ENCODE measurements at regions of chr12 and their contacts with region 1.

Region 1: DNA sequence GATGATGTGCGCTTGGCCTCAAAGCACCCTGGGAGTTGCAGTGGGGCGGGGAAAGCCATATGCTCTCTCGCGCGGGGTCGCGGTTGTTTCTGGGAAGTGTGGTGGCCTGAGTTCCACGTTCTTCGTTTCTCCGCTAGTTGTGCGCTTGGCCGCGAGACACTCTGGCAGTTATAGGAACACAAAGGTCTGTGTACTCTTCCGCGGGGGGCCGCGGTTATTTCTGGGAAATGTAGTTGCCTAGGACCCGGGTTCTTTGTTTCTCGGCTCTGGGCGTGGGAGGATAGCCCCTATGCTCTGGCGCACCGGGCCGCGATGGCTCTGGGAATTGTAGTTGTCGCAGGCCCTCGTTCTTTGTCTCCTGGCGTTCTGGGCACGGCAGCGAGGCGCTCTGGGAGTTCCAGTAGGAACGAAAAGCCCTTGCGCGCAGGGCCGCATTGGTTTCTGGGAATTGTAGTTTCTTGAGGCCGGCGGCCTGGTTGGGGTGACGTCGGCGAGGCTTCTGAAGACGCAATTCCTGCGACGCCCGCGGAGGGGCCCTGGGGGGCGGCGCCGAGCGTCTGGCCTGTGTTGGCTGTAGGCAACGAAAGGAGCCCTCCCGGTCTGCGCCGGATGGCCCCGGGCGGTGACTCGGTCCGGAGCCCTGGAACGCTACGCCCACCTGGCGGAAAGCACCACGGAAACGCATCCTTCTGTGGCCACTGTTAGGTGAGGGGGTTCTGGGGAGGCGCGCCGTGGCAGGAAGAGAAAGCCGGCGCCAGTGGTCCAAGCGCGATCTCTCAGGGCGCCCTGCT is at the start of gene ZNF140:
- DNase-seq: peak; percentile 92 to 94
- ATAC-seq: peak; percentile 82 to 84
- H3K4me3 ChIP-seq: peak within 1 kb of the TSS; percentile 88 to 94 (median 91)
- H3K27ac ChIP-seq: peak within 1 kb of the TSS; percentile 95 to 98 (median 96)
- H3K4me1 ChIP-seq: peaks cover 4 to 12% of the 10 kb centered on the region in 2 donors
- H3K27me3 ChIP-seq: no peaks in the 10 kb centered on the region
- CTCF ChIP-seq: peak; percentile 14 to 42 (median 36)
- POLR2A ChIP-seq: peak; percentile 53 to 61
- total RNA-seq, gene ZNF140: 5.4 to 14.5 (median 9.0) TPM

Region 2: GRCh38 chr12:132687208-132688164 is 393.1 kb before region 1 on chr12 and contains the starts of genes POLE and PXMP2:
- in situ Hi-C with region 1: no loop called
- intact Hi-C with region 1: loop called (anchors 2 kb)
- DNase-seq: peak; percentile 91 to 95
- ATAC-seq: peak; percentile 97 to 98
- H3K4me3 ChIP-seq: peak within 1 kb of the TSS; percentile 65 to 98 (median 80)
- H3K27ac ChIP-seq: peak within 1 kb of the TSS; percentile 62 to 77 (median 72)
- H3K4me1 ChIP-seq: peaks cover 6 to 10% of the 10 kb centered on the region in 2 donors
- H3K27me3 ChIP-seq: no peaks in the 10 kb centered on the region
- CTCF ChIP-seq: peak in 3 of 5 experiments; percentile 12 to 20 (median 18)
- POLR2A ChIP-seq: peak; percentile 74 to 76
- total RNA-seq, gene POLE: 7.1 to 18.7 (median 11.1) TPM
- total RNA-seq, gene PXMP2: 16.0 to 44.8 (median 38.6) TPM

Region 3: DNA sequence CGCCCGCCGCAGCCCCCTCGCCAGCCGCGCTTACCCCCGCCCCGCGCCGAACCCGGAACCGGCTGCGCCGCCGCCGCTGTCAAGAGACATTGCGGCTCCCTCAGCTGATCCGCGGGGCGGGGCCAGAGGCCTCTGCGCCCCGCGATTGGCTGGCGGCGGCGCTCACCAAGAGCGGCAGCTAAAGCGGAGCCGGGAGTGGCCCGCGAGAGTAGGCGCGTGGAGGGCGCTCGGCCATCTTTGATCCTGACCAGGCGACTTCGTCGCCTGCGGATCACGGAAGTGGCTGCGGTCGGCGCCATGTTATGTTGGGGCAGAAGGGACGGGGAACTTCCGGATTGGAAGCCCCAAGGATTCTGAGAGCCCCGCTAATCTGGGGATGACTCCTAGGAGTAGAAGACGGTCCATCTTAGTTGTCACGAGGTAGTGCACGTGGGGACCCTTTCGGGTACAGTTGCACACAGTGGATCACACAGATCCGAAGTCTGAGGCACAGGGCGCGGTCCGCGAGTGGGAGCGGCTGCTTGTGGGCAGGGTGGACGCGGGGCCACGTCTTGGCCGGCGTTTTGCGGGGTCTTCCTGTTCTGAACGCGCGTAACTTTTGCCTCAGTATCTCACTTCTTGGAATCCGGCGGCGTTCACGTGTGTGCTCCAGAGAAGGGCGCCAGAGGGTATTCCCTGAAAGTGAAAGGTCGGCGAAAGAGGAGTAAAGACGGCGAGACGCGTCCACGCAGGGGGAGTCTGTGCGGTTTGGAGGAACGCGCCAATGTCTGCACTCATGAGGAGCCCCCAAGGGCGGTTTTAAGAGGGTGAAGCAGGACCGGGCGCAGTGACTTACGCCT is 192.8 kb before region 1 on chr12 and contains the start of gene CHFR:
- in situ Hi-C with region 1: no loop called
- intact Hi-C with region 1: loop called (anchors 1 kb)
- DNase-seq: peak; percentile 84 to 91
- ATAC-seq: peak; percentile 97
- H3K4me3 ChIP-seq: peak within 1 kb of the TSS; percentile 73 to 91 (median 84)
- H3K27ac ChIP-seq: peak within 1 kb of the TSS; percentile 85 to 93 (median 91)
- H3K4me1 ChIP-seq: peaks cover 4 to 7% of the 10 kb centered on the region in 2 donors
- H3K27me3 ChIP-seq: no peaks in the 10 kb centered on the region
- CTCF ChIP-seq: no peak
- POLR2A ChIP-seq: peak; percentile 44 to 54
- total RNA-seq, gene CHFR: 10.8 to 19.6 (median 12.1) TPM

Region 4: DNA sequence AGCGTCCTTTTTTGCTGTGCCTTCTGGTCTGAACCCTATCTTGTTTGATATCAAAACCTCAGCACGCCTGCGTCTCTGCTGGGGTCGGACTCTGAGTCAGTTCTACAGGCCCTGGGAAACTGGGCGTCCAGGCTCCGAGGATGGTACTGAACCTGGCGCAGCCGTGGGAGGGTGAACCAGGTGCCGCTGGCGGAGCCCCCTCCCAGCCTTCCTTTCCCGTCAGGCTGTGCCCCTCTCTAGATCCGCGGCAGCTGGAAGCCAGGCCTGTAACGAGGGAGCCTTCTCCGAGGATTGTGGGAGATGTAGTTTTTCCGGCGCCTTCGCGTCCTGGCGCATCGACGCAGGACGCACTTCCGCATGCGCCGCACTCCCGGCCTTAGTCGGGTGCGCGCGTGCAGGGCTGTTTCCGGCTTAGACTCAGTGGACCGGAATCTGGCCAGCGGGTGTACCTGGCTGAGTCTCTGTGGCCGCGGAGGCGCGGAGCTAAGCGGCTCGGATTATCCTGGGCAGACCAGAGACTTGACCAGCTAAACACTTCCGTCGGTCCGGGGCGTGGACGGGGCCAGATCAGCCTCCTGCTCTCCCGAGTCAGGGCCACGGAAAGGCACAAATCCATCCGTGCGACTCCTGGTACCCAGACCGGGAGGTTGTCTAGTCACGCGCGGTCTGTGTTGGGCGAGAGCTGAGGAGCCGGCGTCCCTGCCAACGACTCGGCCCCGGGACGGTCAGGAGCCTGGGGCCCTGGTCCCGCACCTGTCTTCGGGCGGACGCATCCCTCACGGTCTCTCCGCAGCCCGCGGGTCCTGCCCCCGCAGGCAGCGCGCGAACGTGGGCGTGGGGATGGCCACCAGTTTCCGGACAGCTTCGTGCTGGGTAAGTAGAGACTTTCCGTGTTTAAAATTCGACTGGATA is 94.3 kb before region 1 on chr12 and contains the start of gene ZNF26:
- in situ Hi-C with region 1: loop called in 1 of 4 experiments (anchors 5 kb)
- intact Hi-C with region 1: loop called (anchors 1 kb)
- DNase-seq: peak; percentile 81 to 86
- ATAC-seq: peak; percentile 99 to 100
- H3K4me3 ChIP-seq: peak within 1 kb of the TSS; percentile 77 to 98 (median 88)
- H3K27ac ChIP-seq: peak within 1 kb of the TSS; percentile 86 to 88 (median 87)
- H3K4me1 ChIP-seq: peaks cover 12 to 13% of the 10 kb centered on the region in 2 donors
- H3K27me3 ChIP-seq: no peaks in the 10 kb centered on the region
- CTCF ChIP-seq: no peak
- POLR2A ChIP-seq: peak; percentile 30 to 50
- total RNA-seq, gene ZNF26: 1.2 to 12.3 (median 2.6) TPM

Region 5: DNA sequence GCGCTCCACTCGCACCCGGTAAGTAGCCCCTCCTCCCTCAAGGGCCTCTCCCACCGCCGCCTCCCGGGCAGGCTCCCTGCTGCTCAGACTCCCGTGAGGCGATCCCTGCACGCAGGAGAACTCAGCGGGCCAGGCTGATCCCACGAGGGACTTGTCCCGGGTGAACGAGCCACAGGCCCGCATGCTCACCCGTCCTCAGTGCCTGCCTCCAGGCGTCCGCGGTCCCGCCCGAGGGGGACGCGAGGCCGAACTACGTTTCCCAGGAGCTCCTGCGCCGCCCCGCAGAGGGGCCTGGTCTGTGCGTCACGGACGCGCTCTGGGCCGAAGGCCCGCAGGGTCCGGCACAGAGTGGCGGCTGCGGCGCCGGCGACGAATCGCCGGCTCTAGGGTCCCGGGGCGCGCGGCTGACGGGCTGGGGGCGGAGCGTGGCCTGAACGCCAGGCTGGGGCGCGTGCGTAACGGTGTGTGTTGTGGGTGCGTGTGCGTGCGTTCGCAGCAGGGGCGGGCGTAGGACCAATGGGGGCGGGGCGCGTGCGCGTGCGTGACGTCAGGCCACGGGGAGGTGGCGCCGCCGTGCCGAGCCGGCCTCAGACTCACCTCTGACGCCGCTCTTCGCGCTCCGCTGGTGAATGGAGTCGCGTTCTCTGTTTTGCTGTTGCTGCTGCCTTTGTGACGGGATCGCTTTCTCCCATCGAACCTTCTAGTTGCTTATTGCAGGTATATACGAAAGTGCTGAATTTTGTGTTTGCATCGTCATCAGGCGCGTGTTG is 49.7 kb after region 1 on chr12 and contains the starts of genes ZNF10 and ZNF891:
- in situ Hi-C with region 1: loop called in 2 of 4 experiments (anchors 5 kb)
- intact Hi-C with region 1: loop called (anchors 1 kb)
- DNase-seq: peak; percentile 90 to 94
- ATAC-seq: peak; percentile 96 to 97
- H3K4me3 ChIP-seq: peak within 1 kb of the TSS; percentile 74 to 98 (median 91)
- H3K27ac ChIP-seq: peak within 1 kb of the TSS; percentile 88 to 98 (median 95)
- H3K4me1 ChIP-seq: peaks cover 9 to 10% of the 10 kb centered on the region in 2 donors
- H3K27me3 ChIP-seq: no peaks in the 10 kb centered on the region
- CTCF ChIP-seq: peak in 2 of 5 experiments; percentile 8 to 22
- POLR2A ChIP-seq: peak; percentile 74 to 88
- total RNA-seq, gene ZNF10: 3.0 to 8.3 (median 4.3) TPM
- total RNA-seq, gene ZNF891: 0.19 to 1.5 (median 0.51) TPM

Region 6: GRCh38 chr12:133165776-133166175 is 85.2 kb after region 1 on chr12:
- in situ Hi-C with region 1: no loop called
- intact Hi-C with region 1: no loop called
- DNase-seq: no peak
- ATAC-seq: no peak
- H3K4me3 ChIP-seq: no peak overlapping the region
- H3K27ac ChIP-seq: no peak overlapping the region
- H3K4me1 ChIP-seq: no peaks in the 10 kb centered on the region
- H3K27me3 ChIP-seq: no peaks in the 10 kb centered on the region
- CTCF ChIP-seq: no peak
- POLR2A ChIP-seq: no peak

Region 7: DNA sequence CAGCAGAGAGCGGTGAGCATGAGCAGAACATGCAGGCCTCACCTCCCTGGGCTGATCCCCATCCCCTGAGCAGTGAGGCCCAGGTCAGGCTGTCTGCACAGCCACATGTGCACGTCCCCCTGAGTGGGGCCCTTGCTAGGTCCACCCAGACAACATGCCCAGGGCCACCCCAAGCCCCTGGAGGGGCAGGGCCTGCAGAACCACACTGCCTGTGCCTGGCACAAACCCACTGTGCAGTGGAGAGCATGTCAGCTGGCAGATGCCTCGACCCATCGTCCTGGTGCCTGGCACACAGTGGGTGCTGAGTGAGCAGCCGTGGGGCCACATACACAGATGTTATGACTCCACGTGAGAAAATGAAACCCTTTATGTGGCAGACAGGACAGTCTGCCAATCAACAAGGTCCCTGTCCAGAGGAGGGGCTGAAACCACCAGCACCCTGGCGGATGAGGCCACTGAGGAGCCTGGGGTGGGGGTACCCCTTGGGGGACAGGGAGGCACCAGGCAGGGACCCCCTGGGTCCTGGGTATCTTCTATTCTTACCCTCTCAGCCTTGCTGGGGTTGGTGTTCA is 146.8 kb after region 1 on chr12:
- in situ Hi-C with region 1: no loop called
- intact Hi-C with region 1: no loop called
- DNase-seq: no peak
- ATAC-seq: no peak
- H3K4me3 ChIP-seq: no peak overlapping the region
- H3K27ac ChIP-seq: no peak overlapping the region
- H3K4me1 ChIP-seq: no peaks in the 10 kb centered on the region
- H3K27me3 ChIP-seq: no peaks in the 10 kb centered on the region
- CTCF ChIP-seq: no peak
- POLR2A ChIP-seq: no peak